ENCODE measurements at regions of chr18 and their contacts with region 1.

Region 1: GRCh38 chr18:9898792-9899549 is 13.2 kb downstream of the TXNDC2 start:
- DNase-seq: no peak
- ATAC-seq: no peak
- H3K4me3 ChIP-seq: no peak overlapping the region
- H3K27ac ChIP-seq: no peak overlapping the region
- H3K4me1 ChIP-seq: no peaks in the 10 kb centered on the region
- H3K27me3 ChIP-seq: no peaks in the 10 kb centered on the region
- CTCF ChIP-seq: no peak

Region 2: GRCh38 chr18:9854801-9855676 is 43.9 kb before region 1 on chr18:
- intact Hi-C with region 1: loop called in 1 of 2 experiments (anchors 5 kb)
- DNase-seq: no peak
- ATAC-seq: peak in 3 of 4 donors; percentile 39 to 50 (median 42)
- H3K4me3 ChIP-seq: no peak overlapping the region
- H3K27ac ChIP-seq: peak overlapping the region; percentile 23
- H3K4me1 ChIP-seq: peaks cover 18% of the 10 kb centered on the region
- H3K27me3 ChIP-seq: no peaks in the 10 kb centered on the region
- CTCF ChIP-seq: no peak

Region 3: GRCh38 chr18:11339188-11339775 is 1440.3 kb after region 1 on chr18:
- intact Hi-C with region 1: no loop called
- DNase-seq: no peak
- ATAC-seq: no peak
- H3K4me3 ChIP-seq: no peak overlapping the region
- H3K27ac ChIP-seq: peak overlapping the region; percentile 59
- H3K4me1 ChIP-seq: peaks cover 22% of the 10 kb centered on the region
- H3K27me3 ChIP-seq: no peaks in the 10 kb centered on the region
- CTCF ChIP-seq: no peak